ENCODE measurements at regions of chr10 and their contacts with region 1.

Region 1: GRCh38 chr10:109883859-109884771 is 39.2 kb downstream of the XPNPEP1 start:
- DNase-seq: peak; percentile 63 to 65
- H3K4me3 ChIP-seq: no peak overlapping the region
- H3K27ac ChIP-seq: no peak overlapping the region
- H3K4me1 ChIP-seq: no peaks in the 10 kb centered on the region
- H3K27me3 ChIP-seq: no peaks in the 10 kb centered on the region
- CTCF ChIP-seq: peak; percentile 88

Region 2: DNA sequence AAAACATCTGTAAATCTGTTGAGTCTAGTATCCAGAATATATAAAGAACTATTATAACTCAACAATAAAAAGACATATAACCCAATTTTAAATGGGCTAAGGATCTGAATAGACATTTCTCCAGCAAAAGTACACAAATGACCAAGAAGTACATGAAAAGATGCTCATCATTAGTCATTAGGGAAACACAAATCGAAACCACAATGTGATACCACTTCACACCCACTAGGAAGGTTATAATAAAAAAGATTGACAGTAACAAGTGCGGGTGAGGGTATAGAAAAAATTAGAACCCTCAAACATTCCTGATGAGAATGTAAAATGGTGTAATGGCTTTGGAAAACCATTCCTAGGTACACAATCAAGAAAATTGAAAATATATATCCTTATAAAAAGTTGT is 35.1 kb after region 1 on chr10:
- CTCF ChIA-PET with region 1: no interaction called
- POLR2A ChIA-PET with region 1: no interaction called
- intact Hi-C with region 1: no loop called
- DNase-seq: no peak
- H3K4me3 ChIP-seq: no peak overlapping the region
- H3K27ac ChIP-seq: no peak overlapping the region
- H3K4me1 ChIP-seq: peaks cover 29% of the 10 kb centered on the region
- H3K27me3 ChIP-seq: no peaks in the 10 kb centered on the region
- CTCF ChIP-seq: no peak

Region 3: DNA sequence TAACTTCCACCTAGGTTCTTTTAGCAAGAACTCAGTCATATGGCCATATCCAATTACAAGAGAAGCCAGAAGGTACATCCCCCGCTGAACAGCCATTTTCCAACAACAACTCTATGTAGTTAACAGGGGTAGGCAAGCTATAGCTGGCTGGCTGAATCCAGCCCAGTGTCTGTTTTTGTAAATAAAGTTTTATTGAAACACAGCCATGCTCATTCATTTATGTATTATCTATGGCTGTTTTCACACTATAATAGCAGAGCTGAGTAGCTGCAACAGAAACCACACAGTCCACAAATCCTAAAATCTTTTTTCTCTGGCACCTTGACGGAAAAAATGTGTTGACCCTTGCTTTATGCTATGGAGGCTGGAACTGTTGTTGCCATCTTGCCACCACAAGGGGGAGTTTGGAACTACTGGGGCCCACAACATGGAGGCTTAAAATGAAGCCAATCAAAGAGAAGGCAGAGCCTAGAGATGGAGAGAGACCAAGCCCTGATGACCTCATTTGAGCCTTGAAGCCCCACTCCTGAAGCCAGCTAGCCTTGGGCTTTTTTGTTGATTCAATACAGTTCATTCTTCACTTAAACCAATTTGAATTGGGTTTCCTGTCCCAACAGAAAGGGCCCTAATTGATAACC is 72.5 kb after region 1 on chr10:
- CTCF ChIA-PET with region 1: no interaction called
- POLR2A ChIA-PET with region 1: no interaction called
- intact Hi-C with region 1: loop called (anchors 5 kb)
- DNase-seq: no peak
- H3K4me3 ChIP-seq: no peak overlapping the region
- H3K27ac ChIP-seq: no peak overlapping the region
- H3K4me1 ChIP-seq: peaks cover 5% of the 10 kb centered on the region; the same call in 1 of the 2 replicates
- H3K27me3 ChIP-seq: no peaks in the 10 kb centered on the region
- CTCF ChIP-seq: peak; percentile 61

Region 4: GRCh38 chr10:110007701-110008517 is 123.8 kb after region 1 on chr10 and contains the start of gene ADD3:
- CTCF ChIA-PET with region 1: interaction called, 3 read pairs
- POLR2A ChIA-PET with region 1: no interaction called
- intact Hi-C with region 1: loop called (anchors 10 kb)
- DNase-seq: peak; percentile 49 to 79
- H3K4me3 ChIP-seq: peak within 1 kb of the TSS; percentile 91
- H3K27ac ChIP-seq: no peak within 1 kb of the TSS
- H3K4me1 ChIP-seq: peaks cover 36% of the 10 kb centered on the region
- H3K27me3 ChIP-seq: no peaks in the 10 kb centered on the region
- CTCF ChIP-seq: no peak
- total RNA-seq, gene ADD3: 61.7 and 77.7 TPM in 2 replicates

Region 5: GRCh38 chr10:110225756-110226542 is 341.8 kb after region 1 on chr10:
- CTCF ChIA-PET with region 1: no interaction called
- POLR2A ChIA-PET with region 1: no interaction called
- intact Hi-C with region 1: loop called (anchors 2 kb)
- DNase-seq: peak; percentile 76 to 80
- H3K4me3 ChIP-seq: peak overlapping the region; percentile 66
- H3K27ac ChIP-seq: peak overlapping the region; percentile 59
- H3K4me1 ChIP-seq: peaks cover 15% of the 10 kb centered on the region
- H3K27me3 ChIP-seq: no peaks in the 10 kb centered on the region
- CTCF ChIP-seq: peak; percentile 61

Region 6: DNA sequence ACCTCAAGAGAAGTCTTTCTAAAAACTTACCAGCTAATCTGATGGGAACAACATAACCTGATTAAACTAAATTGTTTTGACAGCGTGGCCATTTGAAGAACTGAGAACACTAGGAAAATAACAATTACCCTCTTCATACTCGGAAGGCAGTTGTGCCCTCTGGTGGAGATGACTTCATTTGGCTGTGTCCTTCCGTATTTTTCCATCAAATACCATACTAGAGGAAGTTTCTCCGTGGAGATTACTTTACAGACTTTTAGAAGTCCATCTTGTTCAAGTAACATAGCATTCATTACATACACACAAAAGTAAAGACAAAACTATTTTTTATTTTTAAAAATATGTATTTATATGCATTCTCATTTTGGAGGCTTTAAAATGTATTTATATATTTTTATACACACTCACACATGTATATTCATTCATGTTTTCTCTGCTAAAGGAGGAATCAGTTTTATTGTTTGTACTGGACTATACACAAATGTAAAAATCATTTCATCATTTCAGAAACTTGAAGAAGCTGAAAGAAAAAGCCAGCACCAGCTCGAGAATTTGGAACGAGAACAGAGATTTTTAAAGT is 395.4 kb after region 1 on chr10:
- CTCF ChIA-PET with region 1: interaction called, 3 read pairs
- POLR2A ChIA-PET with region 1: no interaction called
- intact Hi-C with region 1: loop called (anchors 1 kb)
- DNase-seq: peak; percentile 20 to 39
- H3K4me3 ChIP-seq: no peak overlapping the region
- H3K27ac ChIP-seq: no peak overlapping the region
- H3K4me1 ChIP-seq: no peaks in the 10 kb centered on the region
- H3K27me3 ChIP-seq: no peaks in the 10 kb centered on the region
- CTCF ChIP-seq: peak; percentile 68